Caco-2 (cell line): ENCODE measurements at regions of chr20 and their contacts with region 1.

Region 1: DNA sequence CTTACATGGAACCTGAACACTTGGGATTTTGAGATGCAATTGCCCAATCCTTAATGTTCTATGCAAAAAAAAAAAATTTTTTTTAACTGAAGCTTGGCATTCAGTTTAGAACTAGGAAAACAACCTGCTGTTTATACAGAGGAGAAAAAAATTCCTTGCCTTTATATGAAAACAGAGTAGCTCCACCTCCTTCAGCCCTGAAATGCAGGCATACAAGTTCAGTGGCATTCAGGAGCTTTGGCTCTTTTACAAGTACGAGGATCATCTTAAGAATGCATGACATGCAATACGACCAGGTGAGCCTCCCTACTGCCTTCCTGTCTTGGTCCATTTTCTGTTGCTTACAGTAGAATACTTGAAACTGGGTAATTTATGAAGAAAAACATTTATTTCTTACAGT is 20.4 kb downstream of the PAX1 start:
- DNase-seq: peak; percentile 78 to 81
- H3K4me3 ChIP-seq: no peak overlapping the region
- H3K4me3 Mint-ChIP-seq: peak overlapping the region; percentile 34
- H3K27ac Mint-ChIP-seq: peak overlapping the region; percentile 85
- H3K4me1 ChIP-seq: peaks cover 28% of the 10 kb centered on the region
- H3K4me1 Mint-ChIP-seq: no peaks in the 10 kb centered on the region
- H3K27me3 ChIP-seq: no peaks in the 10 kb centered on the region
- H3K27me3 Mint-ChIP-seq: no peaks in the 10 kb centered on the region
- CTCF ChIP-seq: no peak

Region 2: GRCh38 chr20:21539511-21539910 is 186.4 kb before region 1 on chr20:
- CTCF ChIA-PET with region 1: no interaction called
- POLR2A ChIA-PET with region 1: no interaction called
- intact Hi-C with region 1: no loop called
- DNase-seq: no peak
- H3K4me3 ChIP-seq: no peak overlapping the region
- H3K4me3 Mint-ChIP-seq: no peak overlapping the region
- H3K27ac Mint-ChIP-seq: no peak overlapping the region
- H3K4me1 ChIP-seq: no peaks in the 10 kb centered on the region
- H3K4me1 Mint-ChIP-seq: no peaks in the 10 kb centered on the region
- H3K27me3 ChIP-seq: no peaks in the 10 kb centered on the region
- H3K27me3 Mint-ChIP-seq: peaks cover 13% of the 10 kb centered on the region
- CTCF ChIP-seq: no peak

Region 3: GRCh38 chr20:21702553-21703470 is 23.1 kb before region 1 on chr20:
- CTCF ChIA-PET with region 1: no interaction called
- POLR2A ChIA-PET with region 1: no interaction called
- intact Hi-C with region 1: no loop called
- DNase-seq: peak in 1 of 2 experiments; percentile 63
- H3K4me3 ChIP-seq: no peak overlapping the region
- H3K4me3 Mint-ChIP-seq: peak overlapping the region; percentile 5
- H3K27ac Mint-ChIP-seq: no peak overlapping the region
- H3K4me1 ChIP-seq: no peaks in the 10 kb centered on the region
- H3K4me1 Mint-ChIP-seq: no peaks in the 10 kb centered on the region
- H3K27me3 ChIP-seq: no peaks in the 10 kb centered on the region
- H3K27me3 Mint-ChIP-seq: peaks cover 21% of the 10 kb centered on the region
- CTCF ChIP-seq: peak in 1 of 2 experiments; percentile 33

Region 4: GRCh38 chr20:21762646-21763045 is 36.8 kb after region 1 on chr20:
- CTCF ChIA-PET with region 1: interaction called, 57 read pairs
- POLR2A ChIA-PET with region 1: interaction called, 7 read pairs
- intact Hi-C with region 1: loop called (anchors 2 kb)
- DNase-seq: no peak
- H3K4me3 ChIP-seq: no peak overlapping the region
- H3K4me3 Mint-ChIP-seq: no peak overlapping the region
- H3K27ac Mint-ChIP-seq: no peak overlapping the region
- H3K4me1 ChIP-seq: 0 out of 2 replicates have a peak, but pooled peaks cover 4% of the 10 kb centered on the region
- H3K4me1 Mint-ChIP-seq: no peaks in the 10 kb centered on the region
- H3K27me3 ChIP-seq: no peaks in the 10 kb centered on the region
- H3K27me3 Mint-ChIP-seq: no peaks in the 10 kb centered on the region
- CTCF ChIP-seq: no peak

Region 5: GRCh38 chr20:21767739-21768223 is 41.9 kb after region 1 on chr20:
- CTCF ChIA-PET with region 1: interaction called, 57 read pairs
- POLR2A ChIA-PET with region 1: interaction called, 7 read pairs
- intact Hi-C with region 1: loop called (anchors 1 kb)
- DNase-seq: peak; percentile 88 to 92
- H3K4me3 ChIP-seq: peak overlapping the region; percentile 34
- H3K4me3 Mint-ChIP-seq: peak overlapping the region; percentile 65
- H3K27ac Mint-ChIP-seq: peak overlapping the region; percentile 63
- H3K4me1 ChIP-seq: peaks cover 5% of the 10 kb centered on the region; the same call in 1 of the 2 replicates
- H3K4me1 Mint-ChIP-seq: peaks cover 6% of the 10 kb centered on the region
- H3K27me3 ChIP-seq: no peaks in the 10 kb centered on the region
- H3K27me3 Mint-ChIP-seq: no peaks in the 10 kb centered on the region
- CTCF ChIP-seq: peak; percentile 86 to 92

Region 6: DNA sequence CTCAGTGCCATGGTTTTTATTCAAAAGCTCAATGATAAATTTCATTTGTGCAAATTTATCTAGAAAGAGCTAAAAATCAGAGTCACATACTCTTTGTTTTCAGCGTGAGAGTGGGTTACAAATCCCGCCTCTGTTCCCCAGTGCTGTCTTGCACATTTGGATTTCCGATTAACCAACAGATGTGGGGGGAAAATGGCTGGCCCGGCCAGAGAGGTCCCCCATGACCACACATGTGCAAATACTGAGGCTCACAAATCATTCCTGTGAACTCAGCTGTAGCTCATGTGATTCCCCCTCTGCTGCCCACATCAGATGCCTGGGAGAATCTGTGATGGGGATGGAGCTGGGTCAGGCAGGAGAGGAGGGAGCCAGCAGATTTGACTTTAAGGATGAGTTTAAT is 148.2 kb after region 1 on chr20:
- CTCF ChIA-PET with region 1: no interaction called
- POLR2A ChIA-PET with region 1: no interaction called
- intact Hi-C with region 1: no loop called
- DNase-seq: no peak
- H3K4me3 ChIP-seq: no peak overlapping the region
- H3K4me3 Mint-ChIP-seq: no peak overlapping the region
- H3K27ac Mint-ChIP-seq: no peak overlapping the region
- H3K4me1 ChIP-seq: no peaks in the 10 kb centered on the region
- H3K4me1 Mint-ChIP-seq: no peaks in the 10 kb centered on the region
- H3K27me3 ChIP-seq: no peaks in the 10 kb centered on the region; the same call in 1 of the 2 replicates
- H3K27me3 Mint-ChIP-seq: peaks cover 6% of the 10 kb centered on the region
- CTCF ChIP-seq: no peak